ENCODE measurements at regions of chr10 and their contacts with region 1.

Region 1: DNA sequence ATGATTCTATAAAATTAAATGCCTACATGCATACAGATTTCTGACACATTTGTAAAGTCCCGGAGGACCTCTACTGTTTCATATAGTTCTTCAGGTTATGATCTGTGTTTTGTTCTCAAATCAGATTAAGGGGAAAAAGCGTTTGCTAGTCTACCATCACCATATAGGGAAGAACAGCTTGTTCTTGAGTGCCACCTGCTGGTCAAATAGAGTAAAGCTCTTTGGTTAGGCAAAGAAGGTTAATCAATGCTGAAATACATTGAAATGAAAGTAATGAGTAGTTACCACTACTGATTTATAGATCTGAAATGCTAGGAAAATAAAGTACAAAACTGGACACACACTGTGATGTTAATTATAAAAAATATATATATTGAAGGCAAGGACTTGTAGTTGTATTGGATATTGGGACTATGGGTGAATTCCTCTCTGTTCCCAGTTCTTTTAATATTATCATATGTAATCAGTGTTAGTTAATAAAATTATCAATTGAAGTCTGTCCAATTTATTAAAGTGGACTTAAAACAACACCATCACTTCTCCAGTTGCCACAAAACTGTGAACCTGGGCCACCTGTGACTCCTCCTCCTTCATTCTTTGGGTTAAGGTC is 72.6 kb upstream of the PDLIM1 start:
- DNase-seq: peak; percentile 78
- CTCF ChIP-seq: peak; percentile 80

Region 2: GRCh38 chr10:94710578-94710977 is 652.8 kb before region 1 on chr10:
- in situ Hi-C with region 1: no loop called
- DNase-seq: no peak
- CTCF ChIP-seq: no peak

Region 3: DNA sequence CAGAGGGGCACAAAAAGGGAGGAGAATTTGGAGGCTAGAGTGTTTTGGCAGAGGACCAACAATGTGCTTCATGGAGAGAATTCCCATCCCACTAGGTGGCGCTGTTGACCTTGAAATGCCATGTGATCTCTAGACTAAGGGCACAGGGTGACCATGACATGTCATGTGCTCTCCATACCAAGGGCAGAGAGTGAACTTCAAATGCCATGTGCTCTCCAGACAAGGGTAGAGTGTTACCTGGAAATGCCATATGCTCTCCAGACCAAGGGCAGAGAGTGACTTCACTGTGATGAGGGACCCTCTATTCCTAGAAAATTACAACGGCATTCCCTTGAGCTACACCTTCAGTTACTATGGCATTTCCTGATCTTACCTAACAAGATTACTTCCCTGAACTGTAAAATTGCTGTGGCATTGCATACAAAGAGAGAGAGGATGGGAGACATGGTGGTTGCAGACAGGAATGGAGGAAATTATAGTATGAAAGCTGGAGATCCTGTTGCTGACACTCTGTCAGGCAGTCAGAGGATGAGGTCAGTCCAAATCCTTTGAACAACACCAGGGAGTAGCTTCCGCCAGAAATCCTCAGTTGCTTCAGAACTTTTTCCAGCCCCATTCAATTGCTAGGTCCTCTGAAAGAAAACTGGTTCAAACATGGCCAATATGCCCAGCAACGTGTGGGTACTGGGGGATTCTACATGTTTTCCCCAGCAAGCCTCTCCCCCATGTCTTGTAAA is 230.2 kb before region 1 on chr10:
- in situ Hi-C with region 1: loop called (anchors 10 kb)
- DNase-seq: peak; percentile 48
- CTCF ChIP-seq: peak; percentile 80

Region 4: GRCh38 chr10:95183271-95184230 is 179.9 kb before region 1 on chr10:
- in situ Hi-C with region 1: loop called (anchors 10 kb)
- DNase-seq: peak; percentile 96
- CTCF ChIP-seq: peak; percentile 98

Region 5: GRCh38 chr10:95246579-95247051 is 116.8 kb before region 1 on chr10:
- in situ Hi-C with region 1: loop called (anchors 10 kb)
- DNase-seq: peak; percentile 54
- CTCF ChIP-seq: peak; percentile 77

Region 6: GRCh38 chr10:95480102-95480900 is 116.9 kb after region 1 on chr10:
- in situ Hi-C with region 1: no loop called
- DNase-seq: no peak
- CTCF ChIP-seq: no peak

Region 7: DNA sequence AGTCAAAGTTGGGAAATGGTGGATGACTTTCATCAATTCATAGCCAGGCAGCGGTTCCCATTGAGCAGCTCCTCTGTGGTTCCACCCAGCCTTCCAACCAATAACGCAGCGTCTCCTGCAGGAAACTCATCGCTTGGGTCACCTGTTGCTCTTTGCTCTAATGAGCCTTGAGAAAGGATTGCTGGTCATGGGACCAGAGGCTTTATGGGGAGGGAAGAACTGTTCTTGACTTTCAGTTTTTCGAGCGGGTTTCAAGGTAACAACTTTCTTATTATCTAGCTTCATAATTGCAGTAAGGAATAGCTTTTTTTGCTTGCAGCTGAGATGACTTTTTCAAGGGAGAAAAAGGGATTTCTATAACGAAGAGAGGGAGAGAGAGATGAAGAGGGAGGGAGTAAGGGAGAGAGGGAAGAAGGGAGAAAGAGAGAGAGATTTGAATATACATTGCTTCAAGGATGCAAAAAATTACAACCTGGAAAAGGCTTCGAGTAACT is 392.1 kb after region 1 on chr10:
- in situ Hi-C with region 1: no loop called
- DNase-seq: peak; percentile 59
- CTCF ChIP-seq: no peak

Measured in GM13977 (cell line).